Mucosa of descending colon (tissue), 3 donors: ENCODE measurements at regions of chr5 and their contacts with region 1.

Region 1: GRCh38 chr5:16952968-16953671 is 17.0 kb upstream of the MYO10 start:
- DNase-seq: peak in 2 of 3 donors; percentile 28 to 45
- ATAC-seq: peak; percentile 88
- H3K4me3 ChIP-seq: no peak overlapping the region
- H3K4me1 ChIP-seq: no peaks in the 10 kb centered on the region
- CTCF ChIP-seq: no peak

Region 2: GRCh38 chr5:17079562-17079961 is 126.4 kb after region 1 on chr5:
- intact Hi-C with region 1: loop called in 1 of 2 experiments (anchors 5 kb)
- DNase-seq: no peak
- ATAC-seq: no peak
- H3K4me3 ChIP-seq: no peak overlapping the region
- H3K4me1 ChIP-seq: no peaks in the 10 kb centered on the region
- CTCF ChIP-seq: no peak

Region 3: DNA sequence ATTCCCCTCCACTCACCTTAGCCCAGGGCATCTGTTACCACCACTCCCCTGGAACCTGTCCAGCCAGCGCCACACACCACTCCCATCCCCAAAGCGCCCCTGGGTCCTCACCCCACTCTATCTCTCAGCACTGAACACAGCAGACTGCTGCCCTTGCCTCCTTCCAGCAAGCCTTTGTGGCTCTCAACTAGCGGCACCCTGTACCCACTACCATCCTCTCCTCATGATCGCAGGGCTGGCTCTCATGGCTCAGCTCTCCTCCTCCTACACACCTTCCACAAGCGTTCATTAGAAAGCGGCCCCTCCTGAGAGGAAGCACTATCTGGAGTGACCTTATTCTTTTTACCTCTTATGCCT is 251.0 kb after region 1 on chr5:
- intact Hi-C with region 1: no loop called
- DNase-seq: no peak
- ATAC-seq: no peak
- H3K4me3 ChIP-seq: no peak overlapping the region
- H3K4me1 ChIP-seq: peaks cover 2% of the 10 kb centered on the region
- CTCF ChIP-seq: no peak